PC-9 (cell line): ENCODE measurements at regions of chr3 and their contacts with region 1.

Region 1: DNA sequence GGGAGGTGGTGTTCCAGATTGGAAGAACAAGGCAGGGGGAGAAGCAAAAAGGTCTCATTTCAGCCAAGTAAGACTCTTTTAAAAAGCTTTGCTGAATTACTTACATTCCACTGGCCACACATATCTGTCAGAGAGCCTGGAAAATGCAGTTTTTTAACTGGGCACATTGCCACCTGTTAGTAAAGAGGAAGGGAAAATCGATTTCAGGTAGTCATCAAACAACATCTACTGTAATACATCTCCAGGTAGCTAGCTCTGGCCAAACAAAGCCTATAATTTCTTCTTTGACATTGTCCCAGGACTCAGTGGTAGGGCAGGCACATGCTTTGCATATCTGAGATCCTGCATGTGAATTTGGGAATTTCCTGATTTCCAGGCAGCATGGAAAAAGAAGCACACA is 480.7 kb upstream of the SUCLG2 start:
- DNase-seq: no peak
- H3K4me3 ChIP-seq: no peak overlapping the region
- H3K27ac ChIP-seq: no peak overlapping the region
- H3K4me1 ChIP-seq: no peaks in the 10 kb centered on the region
- H3K27me3 ChIP-seq: no peaks in the 10 kb centered on the region; the same call in 1 of the 2 replicates
- CTCF ChIP-seq: no peak

Region 2: GRCh38 chr3:67461667-67462142 is 673.4 kb before region 1 on chr3:
- CTCF ChIA-PET with region 1: no interaction called
- POLR2A ChIA-PET with region 1: interaction called, 10 read pairs
- intact Hi-C with region 1: no loop called
- DNase-seq: no peak
- H3K4me3 ChIP-seq: no peak overlapping the region
- H3K27ac ChIP-seq: no peak overlapping the region
- H3K4me1 ChIP-seq: no peaks in the 10 kb centered on the region
- H3K27me3 ChIP-seq: no peaks in the 10 kb centered on the region
- CTCF ChIP-seq: no peak